BJ (cell line): ENCODE measurements at regions of chr2 and their contacts with region 1.

Region 1: GRCh38 chr2:45778720-45779171 is 127.3 kb downstream of the PRKCE start:
- DNase-seq: no peak
- H3K4me3 ChIP-seq: no peak overlapping the region
- H3K27me3 ChIP-seq: no peaks in the 10 kb centered on the region
- CTCF ChIP-seq: peak; percentile 77

Region 2: GRCh38 chr2:45643543-45644542 is 134.9 kb before region 1 on chr2:
- CTCF ChIA-PET with region 1: interaction called, 19 read pairs
- POLR2A ChIA-PET with region 1: no interaction called
- DNase-seq: no peak
- H3K4me3 ChIP-seq: peak overlapping the region; percentile 53
- H3K27me3 ChIP-seq: peaks cover 12% of the 10 kb centered on the region
- CTCF ChIP-seq: peak; percentile 67

Region 3: GRCh38 chr2:45650851-45651414 is 127.8 kb before region 1 on chr2:
- CTCF ChIA-PET with region 1: interaction called, 19 read pairs
- POLR2A ChIA-PET with region 1: no interaction called
- DNase-seq: peak; percentile 81
- H3K4me3 ChIP-seq: peak overlapping the region; percentile 83
- H3K27me3 ChIP-seq: no peaks in the 10 kb centered on the region
- CTCF ChIP-seq: peak; percentile 55

Region 4: DNA sequence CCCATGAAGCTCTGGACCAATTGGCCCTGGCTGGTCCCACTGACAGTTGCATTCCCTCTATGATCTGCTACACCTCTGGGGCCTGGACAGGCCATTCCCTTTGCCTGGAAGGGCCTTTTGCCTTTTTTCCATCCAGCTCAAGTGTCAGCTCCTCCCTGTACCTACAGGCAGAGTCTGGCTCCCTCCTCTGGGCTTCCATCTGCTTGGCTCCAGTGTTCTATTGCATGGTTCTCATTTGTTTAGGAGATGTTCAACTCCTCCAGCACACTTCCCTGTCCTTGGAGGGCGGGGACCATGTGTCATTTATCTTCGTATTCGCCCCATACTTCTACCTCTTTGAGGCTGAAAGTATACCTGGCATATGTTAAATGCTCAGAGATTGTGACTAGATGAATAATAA is 66.2 kb before region 1 on chr2:
- CTCF ChIA-PET with region 1: no interaction called
- POLR2A ChIA-PET with region 1: no interaction called
- DNase-seq: no peak
- H3K4me3 ChIP-seq: no peak overlapping the region
- H3K27me3 ChIP-seq: no peaks in the 10 kb centered on the region
- CTCF ChIP-seq: no peak

Region 5: GRCh38 chr2:45759310-45759851 is 19.4 kb before region 1 on chr2:
- CTCF ChIA-PET with region 1: interaction called, 15 read pairs
- POLR2A ChIA-PET with region 1: no interaction called
- DNase-seq: peak; percentile 59
- H3K4me3 ChIP-seq: peak overlapping the region; percentile 9; the same call in 1 of the 2 replicates
- H3K27me3 ChIP-seq: no peaks in the 10 kb centered on the region
- CTCF ChIP-seq: no peak

Region 6: DNA sequence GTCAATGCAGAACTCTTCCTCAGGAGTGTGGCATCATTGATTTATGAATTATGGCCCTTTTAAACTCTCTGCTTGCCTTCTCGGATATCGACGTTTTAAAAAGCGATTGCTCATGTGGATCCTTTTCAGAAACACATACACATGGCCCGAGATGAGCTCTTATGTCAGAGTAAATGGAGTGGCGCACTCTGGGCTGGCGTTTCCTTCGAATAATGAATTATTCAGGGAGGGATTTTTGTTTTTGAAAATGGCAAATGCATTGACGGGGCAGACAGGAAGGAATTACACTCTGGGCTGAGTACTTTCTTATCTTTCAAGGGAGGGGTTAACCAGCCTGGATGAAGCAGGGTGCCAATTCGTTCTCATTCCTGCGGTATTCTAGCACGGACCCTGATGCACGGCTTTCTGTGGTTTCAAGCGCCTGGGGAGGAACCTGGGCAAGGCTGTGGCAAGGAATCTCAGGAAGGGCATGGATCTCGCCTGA is 15.4 kb after region 1 on chr2:
- CTCF ChIA-PET with region 1: interaction called, 12 read pairs
- POLR2A ChIA-PET with region 1: no interaction called
- DNase-seq: no peak
- H3K4me3 ChIP-seq: no peak overlapping the region
- H3K27me3 ChIP-seq: no peaks in the 10 kb centered on the region
- CTCF ChIP-seq: no peak